ENCODE measurements at regions of chr3 and their contacts with region 1.

Region 1: GRCh38 chr3:179929091-179929529 is 107.6 kb downstream of the PEX5L start:
- DNase-seq: peak; percentile 68
- H3K4me3 ChIP-seq: no peak overlapping the region
- H3K27ac ChIP-seq: no peak overlapping the region
- H3K4me1 ChIP-seq: no peaks in the 10 kb centered on the region
- CTCF ChIP-seq: peak; percentile 99

Region 2: GRCh38 chr3:179898024-179898423 is 31.1 kb before region 1 on chr3:
- CTCF ChIA-PET with region 1: no interaction called
- POLR2A ChIA-PET with region 1: no interaction called
- intact Hi-C with region 1: no loop called
- DNase-seq: peak; percentile 62
- H3K4me3 ChIP-seq: no peak overlapping the region
- H3K27ac ChIP-seq: no peak overlapping the region
- H3K4me1 ChIP-seq: no peaks in the 10 kb centered on the region
- CTCF ChIP-seq: no peak

Region 3: DNA sequence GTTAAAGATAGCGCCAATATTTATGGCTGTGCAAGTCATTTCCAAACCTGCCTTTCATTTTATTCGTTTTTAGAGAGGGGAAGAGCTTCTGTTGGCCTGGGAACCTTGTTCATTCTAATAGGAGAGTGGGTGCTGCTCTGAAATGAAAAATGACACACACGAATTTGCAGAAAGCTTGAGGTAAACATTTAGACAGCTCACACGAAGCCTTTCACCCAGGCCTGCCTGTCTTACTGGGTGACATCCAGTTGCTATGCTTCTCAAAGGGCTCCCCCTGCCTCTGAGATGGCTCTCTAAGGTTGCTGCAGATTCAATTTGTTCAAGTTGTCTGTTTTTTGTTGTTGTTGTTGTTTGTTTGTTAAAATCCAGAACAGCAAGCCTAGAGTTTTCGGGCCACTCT is 89.4 kb after region 1 on chr3:
- CTCF ChIA-PET with region 1: no interaction called
- POLR2A ChIA-PET with region 1: interaction called, 3 read pairs
- intact Hi-C with region 1: loop called (anchors 1 kb)
- DNase-seq: peak; percentile 25
- H3K4me3 ChIP-seq: no peak overlapping the region
- H3K27ac ChIP-seq: no peak overlapping the region
- H3K4me1 ChIP-seq: no peaks in the 10 kb centered on the region
- CTCF ChIP-seq: peak; percentile 54

Region 4: GRCh38 chr3:180063810-180064209 is 134.7 kb after region 1 on chr3:
- CTCF ChIA-PET with region 1: no interaction called
- POLR2A ChIA-PET with region 1: interaction called, 3 read pairs
- intact Hi-C with region 1: loop called (anchors 1 kb)
- DNase-seq: peak; percentile 9
- H3K4me3 ChIP-seq: no peak overlapping the region
- H3K27ac ChIP-seq: no peak overlapping the region
- H3K4me1 ChIP-seq: no peaks in the 10 kb centered on the region
- CTCF ChIP-seq: peak; percentile 33; the same call in 1 of the 2 replicates

Region 5: DNA sequence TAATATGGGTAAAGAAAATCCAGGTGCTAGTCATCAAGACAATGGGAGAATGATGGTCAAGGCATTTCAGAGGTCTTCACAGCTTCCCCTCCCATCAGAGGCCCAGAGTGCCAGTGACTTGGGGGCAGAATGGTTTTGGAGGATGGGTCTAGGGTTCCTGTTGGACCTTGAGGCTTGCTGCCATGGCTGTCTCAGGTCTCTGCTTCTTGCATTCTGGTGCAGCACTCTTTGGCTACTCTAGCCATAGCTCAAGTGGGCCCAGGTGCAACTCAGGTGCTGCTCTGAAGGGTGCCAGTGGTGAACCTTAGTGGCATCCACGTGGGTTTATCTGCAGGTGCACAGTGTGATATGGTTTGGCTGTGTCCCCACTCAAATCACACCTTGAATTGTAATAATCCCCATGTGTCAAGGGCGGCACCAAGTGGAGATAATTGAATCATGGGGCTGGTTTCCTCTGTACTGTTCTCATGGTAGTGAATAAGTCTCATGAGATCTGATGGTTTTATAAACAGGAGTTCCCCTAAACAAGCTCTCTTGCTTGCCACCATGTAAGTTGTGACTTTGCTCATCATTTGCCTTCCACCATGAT is 156.1 kb after region 1 on chr3:
- CTCF ChIA-PET with region 1: interaction called, 3 read pairs
- POLR2A ChIA-PET with region 1: no interaction called
- intact Hi-C with region 1: loop called (anchors 1 kb)
- DNase-seq: peak; percentile 43
- H3K4me3 ChIP-seq: no peak overlapping the region
- H3K27ac ChIP-seq: no peak overlapping the region
- H3K4me1 ChIP-seq: no peaks in the 10 kb centered on the region
- CTCF ChIP-seq: peak; percentile 64

Region 6: GRCh38 chr3:180594631-180595558 is 665.8 kb after region 1 on chr3:
- CTCF ChIA-PET with region 1: no interaction called
- POLR2A ChIA-PET with region 1: no interaction called
- intact Hi-C with region 1: loop called (anchors 10 kb)
- DNase-seq: peak; percentile 27
- H3K4me3 ChIP-seq: no peak overlapping the region
- H3K27ac ChIP-seq: no peak overlapping the region
- H3K4me1 ChIP-seq: no peaks in the 10 kb centered on the region
- CTCF ChIP-seq: peak; percentile 76

Measured in OCI-LY7 (cell line).